HepG2 (cell line): ENCODE measurements at regions of chr1 and their contacts with region 1.

Region 1: DNA sequence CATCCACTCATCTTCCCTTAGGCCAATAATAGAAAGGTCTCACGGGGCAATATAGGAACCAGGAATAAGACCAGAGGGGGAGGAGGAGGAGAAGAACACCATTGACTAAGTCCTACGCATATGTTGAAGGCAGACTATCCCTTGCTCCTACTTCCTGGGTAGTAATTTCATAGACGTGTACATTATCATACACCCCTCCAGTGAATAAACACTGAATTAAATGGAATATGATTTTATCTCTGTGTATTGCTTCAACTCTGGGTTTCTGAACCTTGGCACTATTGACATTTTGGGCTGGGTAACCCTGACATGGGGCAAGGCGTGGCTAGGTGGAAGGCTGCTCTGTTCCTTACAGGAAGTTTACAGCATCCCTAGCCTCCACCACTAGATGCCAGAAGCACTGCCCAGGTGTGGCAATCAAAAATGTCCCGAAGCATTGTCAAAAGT is 17.3 kb upstream of the FHAD1 start:
- DNase-seq: no peak
- ATAC-seq: no peak
- H3K4me3 ChIP-seq: no peak overlapping the region
- H3K27ac ChIP-seq: no peak overlapping the region
- H3K4me1 ChIP-seq: no peaks in the 10 kb centered on the region
- H3K27me3 ChIP-seq: no peaks in the 10 kb centered on the region
- CTCF ChIP-seq: no peak
- EP300 ChIP-seq: no peak
- POLR2A ChIP-seq: no peak
- RAD21 ChIP-seq: no peak

Region 2: DNA sequence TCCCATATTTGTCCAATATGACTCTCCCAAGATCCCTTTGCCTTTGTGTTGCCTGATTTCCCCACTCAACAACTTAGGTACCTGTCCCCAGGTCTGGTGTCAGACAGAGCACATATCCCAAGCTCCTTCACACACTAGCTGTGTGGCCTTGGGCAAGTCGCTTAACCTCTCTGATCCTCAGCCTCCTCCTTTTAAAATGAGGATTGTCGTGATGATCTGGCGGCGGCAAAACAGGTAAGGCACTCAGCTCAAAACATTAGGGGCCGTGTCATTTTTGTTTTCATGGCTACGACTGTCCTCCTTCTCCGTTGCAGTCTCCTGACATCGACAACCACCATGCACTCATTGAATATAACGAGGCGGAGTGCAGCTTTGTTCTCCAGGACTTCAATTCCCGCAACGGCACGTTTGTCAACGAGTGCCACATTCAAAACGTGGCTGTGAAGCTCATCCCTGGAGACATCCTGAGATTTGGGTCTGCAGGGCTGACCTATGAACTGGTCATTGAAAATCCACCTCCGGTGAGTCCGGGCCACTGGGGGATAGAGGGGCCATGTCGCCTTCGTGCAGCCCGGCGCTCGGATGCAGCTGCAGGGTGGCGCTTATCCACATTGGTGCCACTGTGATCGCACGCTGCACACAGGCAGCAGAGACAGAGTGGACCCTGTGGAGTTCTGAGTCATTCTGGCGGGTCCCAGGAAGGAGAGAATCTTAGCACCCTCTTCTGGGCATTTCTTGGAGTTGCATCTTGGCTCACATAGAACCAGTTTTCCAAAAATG is 42.5 kb after region 1 on chr1:
- CTCF ChIA-PET with region 1: no interaction called
- POLR2A ChIA-PET with region 1: no interaction called
- in situ Hi-C with region 1: no loop called
- intact Hi-C with region 1: loop called (anchors 2 kb)
- DNase-seq: peak; percentile 82
- ATAC-seq: peak; percentile 98
- H3K4me3 ChIP-seq: peak overlapping the region in 1 of 3 experiments; percentile 38; a peak in 2 of 6 replicates
- H3K27ac ChIP-seq: no peak overlapping the region
- H3K4me1 ChIP-seq: peaks cover 21% of the 10 kb centered on the region
- H3K27me3 ChIP-seq: peaks cover 2 to 10% of the 10 kb centered on the region in 2 experiments; a peak in 2 of 5 replicates
- CTCF ChIP-seq: peak; percentile 94
- EP300 ChIP-seq: no peak
- POLR2A ChIP-seq: no peak
- RAD21 ChIP-seq: peak; percentile 92

Region 3: DNA sequence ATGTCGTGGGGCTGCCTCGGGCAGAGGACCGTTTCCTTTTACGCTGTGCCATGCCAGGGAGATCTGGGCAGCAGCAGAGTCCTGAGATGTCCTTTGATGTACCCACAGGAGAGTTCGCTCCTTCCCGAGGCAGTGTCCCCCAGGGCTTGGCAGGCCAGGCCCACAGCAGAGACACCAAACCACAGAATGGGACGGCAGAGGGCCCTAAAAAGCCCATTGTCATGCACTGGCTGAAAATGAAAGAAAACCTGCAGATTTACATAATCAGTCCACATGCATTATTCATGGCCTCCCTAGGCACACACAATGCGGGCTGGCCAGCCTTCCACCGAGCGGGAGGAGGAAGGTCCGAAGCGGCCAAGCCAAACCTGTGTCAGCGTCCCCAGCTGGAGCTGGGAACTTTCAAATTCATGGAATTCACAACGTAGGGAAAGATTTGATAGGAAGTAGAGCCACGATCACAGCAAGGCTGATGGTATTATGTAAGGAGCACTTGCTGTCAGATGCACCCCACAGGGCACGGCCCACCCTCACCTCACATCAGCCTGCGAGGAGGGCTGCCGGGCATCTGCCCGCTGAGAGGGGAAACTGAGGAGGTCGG is 154.7 kb after region 1 on chr1:
- CTCF ChIA-PET with region 1: no interaction called
- POLR2A ChIA-PET with region 1: no interaction called
- in situ Hi-C with region 1: no loop called
- intact Hi-C with region 1: no loop called
- DNase-seq: no peak
- ATAC-seq: peak; percentile 40
- H3K4me3 ChIP-seq: 0 out of 6 replicates have a peak overlapping the region, but pooled peaks of 1 of the 3 experiments have one; percentile 4
- H3K27ac ChIP-seq: no peak overlapping the region
- H3K4me1 ChIP-seq: peaks cover 8% of the 10 kb centered on the region; the same call in 1 of the 2 replicates
- H3K27me3 ChIP-seq: peaks cover 7 to 74% of the 10 kb centered on the region in 2 experiments; a peak in 4 of 5 replicates
- CTCF ChIP-seq: no peak
- EP300 ChIP-seq: no peak
- POLR2A ChIP-seq: no peak
- RAD21 ChIP-seq: no peak